ENCODE measurements at regions of chr11 and their contacts with region 1.

Region 1: GRCh38 chr11:62841361-62842184 is 2.2 kb upstream of the WDR74 start:
- DNase-seq: peak; percentile 75 to 94
- ATAC-seq: peak; percentile 46 to 74 (median 65)
- H3K4me3 ChIP-seq: peak overlapping the region; percentile 82
- H3K4me3 Mint-ChIP-seq: no peak overlapping the region
- H3K27ac ChIP-seq: peak overlapping the region; percentile 92
- H3K27ac Mint-ChIP-seq: no peak overlapping the region
- H3K4me1 ChIP-seq: peaks cover 35% of the 10 kb centered on the region
- H3K4me1 Mint-ChIP-seq: peaks cover 17 to 19% of the 10 kb centered on the region in 2 donors
- H3K27me3 ChIP-seq: no peaks in the 10 kb centered on the region
- H3K27me3 Mint-ChIP-seq: no peaks in the 10 kb centered on the region
- CTCF ChIP-seq: no peak

Region 2: DNA sequence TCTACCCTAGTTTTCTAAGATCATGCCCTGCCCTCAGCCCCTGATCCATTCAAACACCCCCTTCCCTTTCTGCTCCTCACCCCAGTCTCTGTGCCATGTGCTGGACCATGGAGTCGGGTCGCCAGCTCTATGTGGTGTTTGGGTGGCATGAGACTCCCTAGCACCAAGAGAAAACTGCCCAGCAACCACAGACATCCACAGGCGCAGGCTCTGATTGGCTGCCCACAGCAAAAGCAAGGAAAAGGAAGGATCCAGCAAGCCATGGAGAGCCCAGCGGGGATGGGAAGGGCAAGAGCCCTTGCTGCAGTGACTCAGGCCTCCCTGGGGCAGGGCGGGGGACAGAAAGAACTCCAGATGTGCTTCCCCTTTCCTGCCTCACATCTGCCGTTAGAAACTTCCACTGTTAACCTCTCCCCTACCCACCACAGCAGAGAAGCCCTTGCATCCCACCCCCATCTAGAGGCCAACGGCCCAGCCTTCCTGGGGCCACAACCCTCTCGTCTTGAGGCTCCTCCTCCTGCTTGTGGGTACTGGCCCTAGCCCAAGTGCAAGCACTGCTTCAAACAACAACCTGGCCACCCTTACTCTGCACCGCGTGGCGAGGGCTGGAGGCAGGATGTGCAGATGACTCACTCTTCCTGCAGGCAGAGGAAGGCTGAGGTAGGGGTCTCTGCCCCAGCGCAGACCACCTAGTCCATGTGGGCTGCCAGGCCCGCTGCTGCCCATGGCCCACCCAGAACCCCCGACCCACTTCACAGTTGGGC is 285.3 kb before region 1 on chr11:
- intact Hi-C with region 1: loop called (anchors 5 kb)
- DNase-seq: peak; percentile 81 to 93
- ATAC-seq: peak; percentile 53 to 79 (median 69)
- H3K4me3 ChIP-seq: peak overlapping the region; percentile 12
- H3K4me3 Mint-ChIP-seq: peak overlapping the region; percentile 93
- H3K27ac ChIP-seq: peak overlapping the region; percentile 97
- H3K27ac Mint-ChIP-seq: peak overlapping the region; percentile 97 to 98
- H3K4me1 ChIP-seq: peaks cover 92% of the 10 kb centered on the region
- H3K4me1 Mint-ChIP-seq: peaks cover 85 to 96% of the 10 kb centered on the region in 2 donors
- H3K27me3 ChIP-seq: no peaks in the 10 kb centered on the region
- H3K27me3 Mint-ChIP-seq: no peaks in the 10 kb centered on the region
- CTCF ChIP-seq: no peak

Region 3: DNA sequence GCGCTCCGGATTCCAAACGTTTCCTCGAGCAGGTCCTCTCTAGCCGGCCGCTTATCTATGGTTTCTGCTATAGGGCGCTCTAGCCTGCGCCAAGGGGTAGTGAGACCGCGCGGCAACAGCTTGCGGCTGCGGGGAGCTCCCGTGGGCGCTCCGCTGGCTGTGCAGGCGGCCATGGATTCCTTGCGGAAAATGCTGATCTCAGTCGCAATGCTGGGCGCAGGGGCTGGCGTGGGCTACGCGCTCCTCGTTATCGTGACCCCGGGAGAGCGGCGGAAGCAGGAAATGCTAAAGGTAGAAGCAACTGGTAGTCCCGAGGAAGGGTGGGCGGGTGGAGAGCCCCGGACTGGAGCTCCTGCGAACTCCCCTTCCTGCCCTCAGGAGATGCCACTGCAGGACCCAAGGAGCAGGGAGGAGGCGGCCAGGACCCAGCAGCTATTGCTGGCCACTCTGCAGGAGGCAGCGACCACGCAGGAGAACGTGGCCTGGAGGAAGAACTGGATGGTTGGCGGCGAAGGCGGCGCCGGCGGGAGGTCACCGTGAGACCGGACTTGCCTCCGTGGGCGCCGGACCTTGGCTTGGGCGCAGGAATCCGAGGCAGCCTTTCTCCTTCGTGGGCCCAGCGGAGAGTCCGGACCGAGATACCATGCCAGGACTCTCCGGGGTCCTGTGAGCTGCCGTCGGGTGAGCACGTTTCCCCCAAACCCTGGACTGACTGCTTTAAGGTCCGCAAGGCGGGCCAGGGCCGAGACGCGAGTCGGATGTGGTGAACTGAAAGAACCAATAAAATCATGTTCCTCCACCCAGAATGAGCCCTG is 169.8 kb before region 1 on chr11 and contains the starts of genes LBHD1 and UQCC3:
- intact Hi-C with region 1: no loop called
- DNase-seq: peak; percentile 76 to 85
- ATAC-seq: peak; percentile 78 to 93 (median 86)
- H3K4me3 ChIP-seq: peak within 1 kb of the TSS; percentile 85
- H3K4me3 Mint-ChIP-seq: peak within 1 kb of the TSS; percentile 99
- H3K27ac ChIP-seq: peak within 1 kb of the TSS; percentile 59
- H3K27ac Mint-ChIP-seq: peak within 1 kb of the TSS; percentile 92 to 97
- H3K4me1 ChIP-seq: peaks cover 28% of the 10 kb centered on the region
- H3K4me1 Mint-ChIP-seq: peaks cover 21 to 36% of the 10 kb centered on the region in 2 donors
- H3K27me3 ChIP-seq: no peaks in the 10 kb centered on the region
- H3K27me3 Mint-ChIP-seq: no peaks in the 10 kb centered on the region
- CTCF ChIP-seq: no peak
- total RNA-seq, gene LBHD1: 17.4 to 29.1 (median 20.4) TPM
- total RNA-seq, gene UQCC3: 3.9 to 5.2 (median 4.0) TPM

Region 4: GRCh38 chr11:62705880-62706849 is 135.4 kb before region 1 on chr11:
- intact Hi-C with region 1: loop called (anchors 5 kb)
- DNase-seq: peak; percentile 93 to 97
- ATAC-seq: peak; percentile 74 to 87 (median 77)
- H3K4me3 ChIP-seq: peak overlapping the region; percentile 70
- H3K4me3 Mint-ChIP-seq: peak overlapping the region; percentile 94
- H3K27ac ChIP-seq: peak overlapping the region; percentile 89
- H3K27ac Mint-ChIP-seq: peak overlapping the region; percentile 91 to 97
- H3K4me1 ChIP-seq: peaks cover 50% of the 10 kb centered on the region
- H3K4me1 Mint-ChIP-seq: peaks cover 36 to 41% of the 10 kb centered on the region in 2 donors
- H3K27me3 ChIP-seq: no peaks in the 10 kb centered on the region
- H3K27me3 Mint-ChIP-seq: no peaks in the 10 kb centered on the region
- CTCF ChIP-seq: no peak

Region 5: GRCh38 chr11:62787005-62787759 is 54.4 kb before region 1 on chr11 and contains the start of gene TMEM179B:
- intact Hi-C with region 1: loop called (anchors 1 kb)
- DNase-seq: peak; percentile 98 to 99
- ATAC-seq: peak; percentile 75 to 91 (median 78)
- H3K4me3 ChIP-seq: peak within 1 kb of the TSS; percentile 99
- H3K4me3 Mint-ChIP-seq: peak within 1 kb of the TSS; percentile 94
- H3K27ac ChIP-seq: peak within 1 kb of the TSS; percentile 91
- H3K27ac Mint-ChIP-seq: peak within 1 kb of the TSS; percentile 94 to 96
- H3K4me1 ChIP-seq: peaks cover 44% of the 10 kb centered on the region
- H3K4me1 Mint-ChIP-seq: peaks cover 32 to 45% of the 10 kb centered on the region in 2 donors
- H3K27me3 ChIP-seq: no peaks in the 10 kb centered on the region
- H3K27me3 Mint-ChIP-seq: no peaks in the 10 kb centered on the region
- CTCF ChIP-seq: peak; percentile 57
- total RNA-seq, gene TMEM179B: 33.7 to 41.1 (median 36.3) TPM

Region 6: GRCh38 chr11:62805076-62805892 is 36.3 kb before region 1 on chr11 and contains the start of gene NXF1:
- intact Hi-C with region 1: loop called (anchors 2 kb)
- DNase-seq: peak; percentile 98 to 99
- ATAC-seq: peak; percentile 86 to 95 (median 86)
- H3K4me3 ChIP-seq: peak within 1 kb of the TSS; percentile 88
- H3K4me3 Mint-ChIP-seq: peak within 1 kb of the TSS; percentile 96
- H3K27ac ChIP-seq: peak within 1 kb of the TSS; percentile 78
- H3K27ac Mint-ChIP-seq: peak within 1 kb of the TSS; percentile 94 to 99
- H3K4me1 ChIP-seq: peaks cover 25% of the 10 kb centered on the region
- H3K4me1 Mint-ChIP-seq: peaks cover 20 to 41% of the 10 kb centered on the region in 2 donors
- H3K27me3 ChIP-seq: no peaks in the 10 kb centered on the region
- H3K27me3 Mint-ChIP-seq: no peaks in the 10 kb centered on the region
- CTCF ChIP-seq: peak; percentile 25
- total RNA-seq, gene NXF1: 284 to 341 (median 319) TPM

Region 7: GRCh38 chr11:62855571-62856332 is 14.2 kb after region 1 on chr11:
- intact Hi-C with region 1: loop called (anchors 1 kb)
- DNase-seq: peak; percentile 97 to 100
- ATAC-seq: peak; percentile 92 to 97 (median 92)
- H3K4me3 ChIP-seq: peak overlapping the region; percentile 79
- H3K4me3 Mint-ChIP-seq: peak overlapping the region; percentile 98
- H3K27ac ChIP-seq: peak overlapping the region; percentile 64
- H3K27ac Mint-ChIP-seq: peak overlapping the region; percentile 95 to 97
- H3K4me1 ChIP-seq: peaks cover 31% of the 10 kb centered on the region
- H3K4me1 Mint-ChIP-seq: peaks cover 45% of the 10 kb centered on the region in 2 donors
- H3K27me3 ChIP-seq: no peaks in the 10 kb centered on the region
- H3K27me3 Mint-ChIP-seq: no peaks in the 10 kb centered on the region
- CTCF ChIP-seq: no peak

Region 8: DNA sequence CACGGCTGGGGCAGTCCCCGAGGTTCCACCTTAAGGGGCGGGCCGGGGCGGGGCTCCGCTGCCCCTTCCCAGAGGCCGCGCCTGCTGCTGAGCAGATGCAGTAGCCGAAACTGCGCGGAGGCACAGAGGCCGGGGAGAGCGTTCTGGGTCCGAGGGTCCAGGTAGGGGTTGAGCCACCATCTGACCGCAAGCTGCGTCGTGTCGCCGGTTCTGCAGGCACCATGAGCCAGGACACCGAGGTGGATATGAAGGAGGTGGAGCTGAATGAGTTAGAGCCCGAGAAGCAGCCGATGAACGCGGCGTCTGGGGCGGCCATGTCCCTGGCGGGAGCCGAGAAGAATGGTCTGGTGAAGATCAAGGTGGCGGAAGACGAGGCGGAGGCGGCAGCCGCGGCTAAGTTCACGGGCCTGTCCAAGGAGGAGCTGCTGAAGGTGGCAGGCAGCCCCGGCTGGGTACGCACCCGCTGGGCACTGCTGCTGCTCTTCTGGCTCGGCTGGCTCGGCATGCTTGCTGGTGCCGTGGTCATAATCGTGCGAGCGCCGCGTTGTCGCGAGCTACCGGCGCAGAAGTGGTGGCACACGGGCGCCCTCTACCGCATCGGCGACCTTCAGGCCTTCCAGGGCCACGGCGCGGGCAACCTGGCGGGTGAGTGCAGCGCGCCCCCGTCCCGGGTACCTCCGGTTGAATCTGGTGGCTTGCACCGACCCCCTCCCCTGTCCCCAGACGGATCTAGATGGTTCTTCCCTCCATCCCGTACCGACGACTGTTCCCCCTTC is 39.4 kb after region 1 on chr11 and contains the start of gene SLC3A2:
- intact Hi-C with region 1: loop called (anchors 2 kb)
- DNase-seq: peak; percentile 88 to 94
- ATAC-seq: peak; percentile 72 to 89 (median 80)
- H3K4me3 ChIP-seq: peak within 1 kb of the TSS; percentile 100
- H3K4me3 Mint-ChIP-seq: peak within 1 kb of the TSS; percentile 100
- H3K27ac ChIP-seq: peak within 1 kb of the TSS; percentile 90
- H3K27ac Mint-ChIP-seq: peak within 1 kb of the TSS; percentile 99
- H3K4me1 ChIP-seq: peaks cover 36% of the 10 kb centered on the region
- H3K4me1 Mint-ChIP-seq: peaks cover 41 to 56% of the 10 kb centered on the region in 2 donors
- H3K27me3 ChIP-seq: no peaks in the 10 kb centered on the region
- H3K27me3 Mint-ChIP-seq: no peaks in the 10 kb centered on the region
- CTCF ChIP-seq: peak; percentile 82
- total RNA-seq, gene SLC3A2: 200 to 235 (median 207) TPM

Region 9: GRCh38 chr11:62911137-62912130 is 69.9 kb after region 1 on chr11:
- intact Hi-C with region 1: no loop called
- DNase-seq: no peak
- ATAC-seq: no peak
- H3K4me3 ChIP-seq: no peak overlapping the region
- H3K4me3 Mint-ChIP-seq: no peak overlapping the region
- H3K27ac ChIP-seq: no peak overlapping the region
- H3K27ac Mint-ChIP-seq: no peak overlapping the region
- H3K4me1 ChIP-seq: no peaks in the 10 kb centered on the region
- H3K4me1 Mint-ChIP-seq: peaks cover 5% of the 10 kb centered on the region in 2 donors
- H3K27me3 ChIP-seq: no peaks in the 10 kb centered on the region
- H3K27me3 Mint-ChIP-seq: peaks cover 0 to 10% of the 10 kb centered on the region in 2 donors
- CTCF ChIP-seq: no peak

Region 10: DNA sequence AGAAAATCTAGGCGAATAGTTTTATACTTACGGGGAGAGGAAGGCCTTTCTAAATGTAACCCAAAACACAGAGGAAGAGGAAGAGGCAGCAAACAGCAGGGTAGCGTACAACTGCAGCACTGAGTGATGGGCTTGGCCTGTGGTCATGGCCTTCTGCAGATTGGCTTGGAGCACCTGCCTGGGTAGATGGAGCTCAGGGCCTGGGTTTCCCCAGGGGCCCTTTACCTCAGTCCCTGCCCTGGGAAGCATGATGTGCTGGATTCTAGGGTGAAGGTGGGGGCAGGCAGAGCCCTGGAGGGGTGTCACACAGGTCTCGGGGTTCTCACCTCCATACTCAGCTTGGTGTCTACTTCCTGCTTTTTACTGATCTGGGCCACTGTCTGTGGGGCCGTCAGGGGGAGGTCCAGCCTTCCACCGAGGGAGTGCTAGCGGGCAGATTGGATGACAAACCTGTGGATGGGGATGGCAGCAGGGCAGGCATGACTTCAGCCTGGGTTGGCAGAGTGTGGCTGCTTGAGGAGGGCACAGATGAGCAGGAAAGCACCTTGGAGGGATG is 107.3 kb after region 1 on chr11:
- intact Hi-C with region 1: no loop called
- DNase-seq: no peak
- ATAC-seq: no peak
- H3K4me3 ChIP-seq: no peak overlapping the region
- H3K4me3 Mint-ChIP-seq: no peak overlapping the region
- H3K27ac ChIP-seq: no peak overlapping the region
- H3K27ac Mint-ChIP-seq: no peak overlapping the region
- H3K4me1 ChIP-seq: no peaks in the 10 kb centered on the region
- H3K4me1 Mint-ChIP-seq: no peaks in the 10 kb centered on the region
- H3K27me3 ChIP-seq: no peaks in the 10 kb centered on the region
- H3K27me3 Mint-ChIP-seq: peaks cover 23 to 28% of the 10 kb centered on the region in 2 donors
- CTCF ChIP-seq: no peak

Measured in natural killer cell (primary cell).